ENCODE measurements at regions of chr3 and their contacts with region 1.

Region 1: DNA sequence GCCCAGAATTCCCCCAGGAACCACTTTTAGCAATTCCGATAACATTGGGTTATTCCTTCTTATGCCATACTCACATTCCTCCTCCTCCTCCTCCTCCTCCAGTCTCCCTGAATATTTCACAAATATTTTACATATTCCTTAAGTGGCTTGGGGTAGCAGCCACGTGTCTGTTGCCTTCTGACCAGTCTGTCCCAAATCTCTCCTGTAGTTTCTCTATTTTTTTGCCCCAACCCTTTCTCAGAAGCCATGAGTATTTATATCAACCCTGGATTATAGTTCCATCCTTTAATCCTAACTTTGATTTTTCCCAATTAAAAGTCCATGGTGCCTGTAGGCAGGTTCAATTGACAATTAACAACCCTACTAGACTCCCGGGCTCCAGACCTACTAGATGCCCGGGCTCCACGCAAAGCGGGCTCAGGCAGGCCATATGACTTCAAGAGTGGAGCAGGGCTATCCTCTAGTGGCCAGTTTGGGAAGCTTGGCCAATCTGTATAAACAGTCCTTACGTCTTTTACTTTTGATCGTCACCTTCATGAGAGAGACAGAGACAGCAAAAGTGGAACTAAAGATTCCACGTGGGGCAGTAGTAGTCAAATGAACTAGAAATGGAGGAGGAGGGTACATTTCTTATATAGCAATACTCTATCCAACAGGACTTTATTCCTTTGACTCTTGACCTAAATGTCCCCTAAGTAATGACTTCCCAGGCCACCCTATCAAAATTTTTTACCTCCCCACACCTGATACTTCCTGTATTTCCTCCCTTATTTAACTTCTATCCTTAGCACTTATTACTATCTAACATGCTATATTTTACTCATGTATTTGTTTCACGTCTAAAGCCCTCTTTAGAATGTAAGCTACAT is 69.7 kb downstream of the USF3 start:
- DNase-seq: peak; percentile 80
- ATAC-seq: peak; percentile 94
- H3K4me3 ChIP-seq: peak overlapping the region; percentile 34 to 68 (median 63)
- H3K4me3 Mint-ChIP-seq: peak overlapping the region; percentile 90
- H3K27ac ChIP-seq: peak overlapping the region; percentile 83 to 86
- H3K27ac Mint-ChIP-seq: peak overlapping the region; percentile 95
- H3K4me1 ChIP-seq: peaks cover 39 to 41% of the 10 kb centered on the region in 2 donors
- H3K4me1 Mint-ChIP-seq: peaks cover 58% of the 10 kb centered on the region
- H3K27me3 ChIP-seq: no peaks in the 10 kb centered on the region
- H3K27me3 Mint-ChIP-seq: no peaks in the 10 kb centered on the region
- CTCF ChIP-seq: peak; percentile 79

Region 2: DNA sequence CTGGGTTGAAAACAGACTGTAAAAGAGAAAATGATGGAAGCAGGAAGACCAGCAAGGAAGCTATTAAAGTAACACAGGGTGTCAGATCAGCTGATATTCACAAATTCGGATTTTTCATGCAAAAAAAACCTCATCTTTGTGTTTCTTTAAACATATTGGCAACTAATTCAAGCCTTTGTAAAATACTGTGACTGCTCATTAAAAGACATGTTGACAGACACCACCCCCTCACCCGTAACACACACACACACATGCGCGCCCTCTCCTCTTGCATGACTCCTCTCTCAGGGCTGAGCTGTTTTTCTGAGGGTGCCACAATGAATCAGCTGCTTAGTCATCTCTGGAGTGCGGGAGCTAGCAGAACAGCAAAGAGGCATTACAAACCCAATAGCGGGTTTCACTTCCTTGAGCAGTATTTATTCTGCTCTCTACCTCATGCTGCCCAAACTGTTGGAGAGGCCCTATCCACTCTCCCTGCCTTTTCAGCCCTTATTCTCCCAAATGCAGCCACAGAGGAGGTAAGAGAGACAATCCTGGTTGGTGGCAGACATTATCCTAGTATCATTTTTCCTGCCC is 950.0 kb before region 1 on chr3:
- CTCF ChIA-PET with region 1: no interaction called
- POLR2A ChIA-PET with region 1: no interaction called
- intact Hi-C with region 1: no loop called
- DNase-seq: peak; percentile 75
- ATAC-seq: peak; percentile 98
- H3K4me3 ChIP-seq: no peak overlapping the region
- H3K4me3 Mint-ChIP-seq: peak overlapping the region; percentile 17
- H3K27ac ChIP-seq: no peak overlapping the region
- H3K27ac Mint-ChIP-seq: peak overlapping the region; percentile 39
- H3K4me1 ChIP-seq: peaks cover 14 to 15% of the 10 kb centered on the region in 2 donors
- H3K4me1 Mint-ChIP-seq: peaks cover 27% of the 10 kb centered on the region
- H3K27me3 ChIP-seq: peaks cover 0 to 3% (median 0%) of the 10 kb centered on the region in 4 experiments
- H3K27me3 Mint-ChIP-seq: peaks cover 12% of the 10 kb centered on the region
- CTCF ChIP-seq: no peak

Region 3: GRCh38 chr3:113051302-113051711 is 575.4 kb before region 1 on chr3:
- CTCF ChIA-PET with region 1: no interaction called
- POLR2A ChIA-PET with region 1: no interaction called
- intact Hi-C with region 1: loop called (anchors 5 kb)
- DNase-seq: peak; percentile 88
- ATAC-seq: peak; percentile 100
- H3K4me3 ChIP-seq: no peak overlapping the region
- H3K4me3 Mint-ChIP-seq: no peak overlapping the region
- H3K27ac ChIP-seq: no peak overlapping the region
- H3K27ac Mint-ChIP-seq: no peak overlapping the region
- H3K4me1 ChIP-seq: peaks cover 0 to 4% of the 10 kb centered on the region in 2 donors
- H3K4me1 Mint-ChIP-seq: peaks cover 2% of the 10 kb centered on the region
- H3K27me3 ChIP-seq: no peaks in the 10 kb centered on the region
- H3K27me3 Mint-ChIP-seq: no peaks in the 10 kb centered on the region
- CTCF ChIP-seq: peak; percentile 95

Region 4: GRCh38 chr3:113495035-113495434 is 131.7 kb before region 1 on chr3:
- CTCF ChIA-PET with region 1: interaction called, 42 read pairs
- POLR2A ChIA-PET with region 1: no interaction called
- intact Hi-C with region 1: loop called (anchors 1 kb)
- DNase-seq: peak; percentile 60
- ATAC-seq: peak; percentile 47
- H3K4me3 ChIP-seq: no peak overlapping the region
- H3K4me3 Mint-ChIP-seq: no peak overlapping the region
- H3K27ac ChIP-seq: no peak overlapping the region
- H3K27ac Mint-ChIP-seq: no peak overlapping the region
- H3K4me1 ChIP-seq: no peaks in the 10 kb centered on the region
- H3K4me1 Mint-ChIP-seq: no peaks in the 10 kb centered on the region
- H3K27me3 ChIP-seq: no peaks in the 10 kb centered on the region
- H3K27me3 Mint-ChIP-seq: no peaks in the 10 kb centered on the region
- CTCF ChIP-seq: peak; percentile 57

Region 5: GRCh38 chr3:113531826-113532697 is 94.7 kb before region 1 on chr3 and contains the start of gene SIDT1:
- CTCF ChIA-PET with region 1: no interaction called
- POLR2A ChIA-PET with region 1: no interaction called
- intact Hi-C with region 1: loop called (anchors 1 kb)
- DNase-seq: peak; percentile 89
- ATAC-seq: peak; percentile 81
- H3K4me3 ChIP-seq: peak within 1 kb of the TSS; percentile 86 to 96 (median 95)
- H3K4me3 Mint-ChIP-seq: peak within 1 kb of the TSS; percentile 93
- H3K27ac ChIP-seq: peak within 1 kb of the TSS; percentile 86 to 87
- H3K27ac Mint-ChIP-seq: peak within 1 kb of the TSS; percentile 96
- H3K4me1 ChIP-seq: peaks cover 35 to 36% of the 10 kb centered on the region in 2 donors
- H3K4me1 Mint-ChIP-seq: peaks cover 46% of the 10 kb centered on the region
- H3K27me3 ChIP-seq: no peaks in the 10 kb centered on the region
- H3K27me3 Mint-ChIP-seq: peaks cover 6% of the 10 kb centered on the region
- CTCF ChIP-seq: no peak
- total RNA-seq, gene SIDT1: 75.4 and 84.4 TPM in 2 replicates

Region 6: DNA sequence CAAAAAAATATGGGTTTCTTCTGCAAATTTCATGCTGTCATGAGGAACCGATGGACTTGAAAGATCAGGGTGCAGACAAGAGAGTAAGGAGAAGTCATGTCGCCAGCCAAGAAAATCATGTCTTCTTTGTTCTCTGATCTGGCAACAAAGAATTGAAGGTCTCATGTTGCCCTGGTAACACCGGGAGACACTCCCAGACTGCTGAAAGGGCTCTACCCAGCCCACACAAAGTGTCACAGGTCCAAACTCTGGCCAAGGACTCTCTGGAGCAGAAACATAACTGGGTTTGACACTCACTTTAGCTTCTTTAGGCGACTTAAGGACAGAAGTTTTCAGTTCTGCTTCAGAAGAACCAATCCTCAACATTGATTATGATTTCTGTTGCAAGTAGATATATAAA is 51.5 kb before region 1 on chr3:
- CTCF ChIA-PET with region 1: interaction called, 29 read pairs
- POLR2A ChIA-PET with region 1: no interaction called
- intact Hi-C with region 1: loop called (anchors 1 kb)
- DNase-seq: no peak
- ATAC-seq: no peak
- H3K4me3 ChIP-seq: no peak overlapping the region
- H3K4me3 Mint-ChIP-seq: no peak overlapping the region
- H3K27ac ChIP-seq: peak overlapping the region in 1 of 2 donors; percentile 46
- H3K27ac Mint-ChIP-seq: no peak overlapping the region
- H3K4me1 ChIP-seq: peaks cover 2 to 3% of the 10 kb centered on the region in 2 donors
- H3K4me1 Mint-ChIP-seq: peaks cover 4% of the 10 kb centered on the region
- H3K27me3 ChIP-seq: no peaks in the 10 kb centered on the region
- H3K27me3 Mint-ChIP-seq: no peaks in the 10 kb centered on the region
- CTCF ChIP-seq: no peak

Region 7: DNA sequence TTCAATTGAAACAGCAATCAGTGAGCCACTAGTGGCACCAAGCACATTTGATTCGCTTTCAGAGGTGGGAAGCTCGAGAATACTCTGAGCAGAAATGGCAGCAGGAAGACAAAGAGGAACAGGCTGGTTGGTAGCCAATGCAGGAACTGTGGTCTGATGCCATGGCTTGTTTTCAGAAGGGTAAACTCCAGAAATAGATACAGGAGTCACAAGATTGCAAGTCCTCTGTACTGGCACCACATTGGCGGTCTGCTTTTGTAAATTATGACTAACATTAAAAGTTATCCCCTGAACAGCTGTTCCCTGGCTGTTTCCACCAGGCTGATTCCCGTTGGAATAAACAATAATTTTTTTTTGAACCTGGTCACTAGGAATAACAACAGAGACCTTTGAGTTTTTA is 34.2 kb after region 1 on chr3:
- CTCF ChIA-PET with region 1: interaction called, 3 read pairs
- POLR2A ChIA-PET with region 1: interaction called, 3 read pairs
- intact Hi-C with region 1: loop called (anchors 1 kb)
- DNase-seq: peak; percentile 68
- ATAC-seq: peak; percentile 25
- H3K4me3 ChIP-seq: peak overlapping the region in 1 of 5 experiments; percentile 49
- H3K4me3 Mint-ChIP-seq: peak overlapping the region; percentile 70
- H3K27ac ChIP-seq: peak overlapping the region; percentile 81 to 93
- H3K27ac Mint-ChIP-seq: peak overlapping the region; percentile 94
- H3K4me1 ChIP-seq: peaks cover 76 to 81% of the 10 kb centered on the region in 2 donors
- H3K4me1 Mint-ChIP-seq: peaks cover 82% of the 10 kb centered on the region
- H3K27me3 ChIP-seq: no peaks in the 10 kb centered on the region
- H3K27me3 Mint-ChIP-seq: no peaks in the 10 kb centered on the region
- CTCF ChIP-seq: no peak